ENCODE measurements at regions of chr20 and their contacts with region 1.

Region 1: GRCh38 chr20:1894951-1895673 is at the start of gene SIRPA:
- DNase-seq: peak; percentile 77 to 87
- ATAC-seq: peak; percentile 71 to 88 (median 78)
- H3K4me3 ChIP-seq: peak within 1 kb of the TSS; percentile 89
- H3K27ac ChIP-seq: peak within 1 kb of the TSS; percentile 91
- H3K4me1 ChIP-seq: peaks cover 23% of the 10 kb centered on the region
- H3K27me3 ChIP-seq: no peaks in the 10 kb centered on the region
- CTCF ChIP-seq: no peak
- total RNA-seq, gene SIRPA: 14.9 to 42.9 (median 22.7) TPM

Region 2: DNA sequence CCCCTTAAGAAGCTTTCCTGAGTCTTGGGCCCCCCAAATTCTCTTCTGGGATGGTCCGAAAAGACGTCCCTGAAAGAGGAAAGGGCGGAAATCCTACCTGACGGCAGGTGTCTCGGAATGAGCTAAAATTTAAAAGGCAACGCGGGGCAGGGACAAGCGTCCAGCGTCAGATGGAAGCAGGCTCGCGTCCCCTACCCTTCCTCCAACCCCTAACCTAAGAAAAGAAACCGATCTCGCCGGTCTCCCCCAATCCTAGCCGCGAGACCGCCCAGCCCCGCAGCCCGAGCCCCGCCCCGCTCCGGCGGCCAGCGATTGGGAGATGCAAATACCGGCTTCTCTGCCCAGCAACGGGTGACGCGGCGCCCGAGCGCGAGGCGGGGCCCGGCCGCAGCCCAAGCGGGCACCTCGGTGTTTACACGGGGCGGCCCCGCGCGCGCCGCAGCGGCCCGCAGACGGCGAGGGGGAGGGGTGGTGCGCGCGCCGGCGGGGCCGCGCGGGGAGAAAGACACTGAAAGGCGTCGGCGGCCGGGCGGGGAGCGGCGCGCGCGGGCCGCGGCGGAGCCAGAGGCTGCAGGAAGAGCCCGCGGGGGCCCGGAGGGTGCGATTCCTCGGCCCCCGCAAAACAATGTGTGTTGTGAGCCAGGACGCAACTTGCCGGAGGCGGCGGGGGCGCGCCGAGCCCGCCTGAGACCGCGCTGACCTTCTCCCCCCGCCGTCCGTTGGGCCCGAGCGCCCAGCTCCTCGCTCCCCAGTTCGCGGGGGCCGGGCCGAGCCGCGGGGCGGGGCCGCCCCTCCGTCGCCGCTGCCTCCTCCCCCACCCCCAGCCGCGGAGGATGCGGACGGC is 1569.8 kb before region 1 on chr20 and contains the start of gene SOX12:
- intact Hi-C with region 1: no loop called
- DNase-seq: peak; percentile 97
- ATAC-seq: peak; percentile 86 to 92 (median 88)
- H3K4me3 ChIP-seq: peak within 1 kb of the TSS; percentile 70
- H3K27ac ChIP-seq: peak within 1 kb of the TSS; percentile 79
- H3K4me1 ChIP-seq: peaks cover 5% of the 10 kb centered on the region
- H3K27me3 ChIP-seq: no peaks in the 10 kb centered on the region
- CTCF ChIP-seq: no peak
- total RNA-seq, gene SOX12: 1.2 to 5.7 (median 5.2) TPM

Region 3: GRCh38 chr20:1802385-1803060 is 92.6 kb before region 1 on chr20:
- intact Hi-C with region 1: loop called (anchors 2 to 10 kb)
- DNase-seq: peak; percentile 65 to 82
- ATAC-seq: peak; percentile 81 to 93 (median 88)
- H3K4me3 ChIP-seq: peak overlapping the region; percentile 77
- H3K27ac ChIP-seq: peak overlapping the region; percentile 61
- H3K4me1 ChIP-seq: peaks cover 20% of the 10 kb centered on the region
- H3K27me3 ChIP-seq: peaks cover 0 to 13% (median 0%) of the 10 kb centered on the region in 3 donors
- CTCF ChIP-seq: peak; percentile 60

Region 4: DNA sequence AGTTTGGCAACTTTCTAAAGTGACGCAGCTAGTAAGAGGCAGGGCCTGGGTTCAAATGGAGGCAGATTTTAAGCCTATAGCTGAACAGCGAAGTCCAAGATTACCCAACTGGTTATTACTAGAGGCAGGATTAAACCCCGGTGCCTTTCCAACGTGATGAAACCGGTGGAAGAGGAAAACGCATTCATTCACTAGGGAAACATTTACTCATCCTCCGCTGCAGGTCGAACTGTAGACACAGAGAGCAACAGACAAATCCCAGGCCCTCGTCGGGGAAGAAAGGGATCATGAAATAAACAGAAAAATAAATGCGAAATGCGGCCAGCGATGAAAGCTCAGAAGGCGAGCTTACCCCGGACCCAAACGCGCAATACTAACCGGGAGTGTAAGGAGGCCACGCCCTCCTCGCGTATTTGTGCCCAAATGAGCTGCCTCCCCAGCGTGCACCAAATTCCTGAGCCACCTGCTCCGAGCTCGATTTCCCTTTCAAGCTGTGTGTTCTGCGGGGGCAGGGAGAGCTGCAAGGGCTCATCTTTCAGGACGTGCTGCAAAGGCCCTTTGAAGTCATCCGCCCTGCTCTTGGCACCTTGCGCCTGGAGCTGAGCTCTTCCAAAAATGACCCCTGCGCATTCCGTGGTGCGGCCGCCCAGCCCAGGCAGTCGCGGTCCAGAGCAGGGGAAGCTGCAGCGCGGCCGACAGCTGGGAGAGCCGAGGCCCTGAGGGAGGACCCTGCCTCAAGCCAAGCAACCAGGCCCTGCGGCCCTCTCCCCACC is 51.8 kb after region 1 on chr20:
- intact Hi-C with region 1: loop called in 1 of 2 experiments (anchors 5 kb)
- DNase-seq: peak; percentile 80 to 84
- ATAC-seq: peak; percentile 85 to 95 (median 88)
- H3K4me3 ChIP-seq: peak overlapping the region; percentile 49
- H3K27ac ChIP-seq: peak overlapping the region; percentile 81
- H3K4me1 ChIP-seq: peaks cover 35% of the 10 kb centered on the region
- H3K27me3 ChIP-seq: peaks cover 0 to 3% (median 0%) of the 10 kb centered on the region in 3 donors
- CTCF ChIP-seq: no peak

Region 5: DNA sequence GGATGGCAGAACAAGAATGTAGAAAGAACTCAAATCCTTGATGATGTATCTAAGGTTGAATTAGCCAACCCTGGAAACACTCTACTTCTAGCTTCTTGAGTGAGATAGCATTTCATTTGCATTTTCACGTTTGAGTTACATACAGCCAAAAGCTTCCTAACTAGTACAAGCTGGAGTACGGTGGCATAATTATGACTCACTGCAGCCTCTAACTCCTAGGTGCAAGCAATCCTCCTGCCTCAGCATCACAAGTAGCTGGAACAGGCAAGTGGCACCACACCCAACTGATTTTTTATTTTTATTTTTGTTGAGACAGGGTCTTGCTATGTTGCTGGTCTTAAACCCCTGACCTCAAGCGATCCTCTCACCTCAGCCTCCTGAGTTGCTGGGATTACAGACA is 170.0 kb after region 1 on chr20:
- intact Hi-C with region 1: no loop called
- DNase-seq: no peak
- ATAC-seq: no peak
- H3K4me3 ChIP-seq: no peak overlapping the region
- H3K27ac ChIP-seq: no peak overlapping the region
- H3K4me1 ChIP-seq: no peaks in the 10 kb centered on the region
- H3K27me3 ChIP-seq: peaks cover 0 to 22% (median 0%) of the 10 kb centered on the region in 3 donors
- CTCF ChIP-seq: no peak

Region 6: GRCh38 chr20:2101865-2102584 is 206.9 kb after region 1 on chr20:
- intact Hi-C with region 1: loop called (anchors 10 kb)
- DNase-seq: peak; percentile 95 to 96
- ATAC-seq: peak; percentile 91 to 93 (median 92)
- H3K4me3 ChIP-seq: peak overlapping the region; percentile 93
- H3K27ac ChIP-seq: peak overlapping the region; percentile 99
- H3K4me1 ChIP-seq: peaks cover 36% of the 10 kb centered on the region
- H3K27me3 ChIP-seq: no peaks in the 10 kb centered on the region
- CTCF ChIP-seq: no peak

Measured in psoas muscle (tissue), 8 donors.